ENCODE measurements at regions of chr14 and their contacts with region 1.

Region 1: DNA sequence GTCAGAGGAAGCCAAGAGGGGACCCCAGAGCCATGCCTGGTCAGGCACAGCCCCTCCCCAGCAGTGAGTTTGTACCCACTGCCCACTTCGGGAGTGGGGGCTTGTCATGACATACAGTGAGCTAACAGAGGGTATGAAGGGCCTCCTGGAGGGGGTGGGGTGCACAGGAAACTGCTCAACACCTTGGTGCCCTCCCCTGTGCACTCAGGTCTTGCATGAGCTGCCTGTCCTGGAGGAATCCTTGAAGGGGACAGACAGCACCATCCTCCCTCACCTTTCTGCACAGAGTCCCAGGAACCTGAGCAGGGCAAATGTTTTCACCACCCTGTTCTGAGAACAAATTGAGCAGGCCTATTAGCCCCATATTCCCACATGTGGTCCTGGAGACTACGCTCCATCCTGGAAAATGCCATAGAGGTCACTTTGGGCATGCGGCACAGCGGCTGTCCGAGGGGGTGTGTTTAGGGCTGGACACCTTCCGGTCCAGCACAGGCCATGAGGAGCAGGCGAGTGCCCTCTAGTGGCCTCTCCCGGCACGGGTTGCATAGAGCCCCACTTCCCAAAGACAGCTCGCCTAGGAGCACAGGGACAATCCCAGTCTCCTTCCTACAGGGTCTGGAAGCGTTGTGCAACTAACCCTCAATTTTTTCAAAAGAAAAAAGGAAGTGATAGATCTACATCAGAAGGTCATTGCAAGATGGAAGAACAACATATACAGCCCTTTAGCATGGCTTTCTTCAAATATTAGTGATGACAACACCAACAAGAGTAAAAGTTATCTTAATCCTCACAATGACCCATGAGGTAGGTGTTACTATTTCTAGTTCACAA is 31.9 kb upstream of the ZFP36L1 start:
- DNase-seq: peak; percentile 62
- ATAC-seq: peak; percentile 99
- H3K4me3 ChIP-seq: no peak overlapping the region
- H3K27ac ChIP-seq: no peak overlapping the region
- H3K4me1 ChIP-seq: no peaks in the 10 kb centered on the region
- H3K27me3 ChIP-seq: no peaks in the 10 kb centered on the region
- CTCF ChIP-seq: peak; percentile 83
- POLR2A ChIP-seq: no peak
- RAD21 ChIP-seq: peak; percentile 76

Region 2: GRCh38 chr14:67934008-67934481 is 890.7 kb before region 1 on chr14:
- CTCF ChIA-PET with region 1: interaction called, 3 read pairs
- POLR2A ChIA-PET with region 1: no interaction called
- dilution Hi-C with region 1: no loop called
- in situ Hi-C with region 1: loop called (anchors 5 kb)
- intact Hi-C with region 1: no loop called
- DNase-seq: peak; percentile 85
- ATAC-seq: peak; percentile 96
- H3K4me3 ChIP-seq: no peak overlapping the region
- H3K27ac ChIP-seq: no peak overlapping the region; the same call in 1 of the 2 replicates
- H3K4me1 ChIP-seq: no peaks in the 10 kb centered on the region; the same call in 1 of the 2 replicates
- H3K27me3 ChIP-seq: no peaks in the 10 kb centered on the region
- CTCF ChIP-seq: peak; percentile 75
- POLR2A ChIP-seq: no peak
- RAD21 ChIP-seq: peak; percentile 71

Region 3: DNA sequence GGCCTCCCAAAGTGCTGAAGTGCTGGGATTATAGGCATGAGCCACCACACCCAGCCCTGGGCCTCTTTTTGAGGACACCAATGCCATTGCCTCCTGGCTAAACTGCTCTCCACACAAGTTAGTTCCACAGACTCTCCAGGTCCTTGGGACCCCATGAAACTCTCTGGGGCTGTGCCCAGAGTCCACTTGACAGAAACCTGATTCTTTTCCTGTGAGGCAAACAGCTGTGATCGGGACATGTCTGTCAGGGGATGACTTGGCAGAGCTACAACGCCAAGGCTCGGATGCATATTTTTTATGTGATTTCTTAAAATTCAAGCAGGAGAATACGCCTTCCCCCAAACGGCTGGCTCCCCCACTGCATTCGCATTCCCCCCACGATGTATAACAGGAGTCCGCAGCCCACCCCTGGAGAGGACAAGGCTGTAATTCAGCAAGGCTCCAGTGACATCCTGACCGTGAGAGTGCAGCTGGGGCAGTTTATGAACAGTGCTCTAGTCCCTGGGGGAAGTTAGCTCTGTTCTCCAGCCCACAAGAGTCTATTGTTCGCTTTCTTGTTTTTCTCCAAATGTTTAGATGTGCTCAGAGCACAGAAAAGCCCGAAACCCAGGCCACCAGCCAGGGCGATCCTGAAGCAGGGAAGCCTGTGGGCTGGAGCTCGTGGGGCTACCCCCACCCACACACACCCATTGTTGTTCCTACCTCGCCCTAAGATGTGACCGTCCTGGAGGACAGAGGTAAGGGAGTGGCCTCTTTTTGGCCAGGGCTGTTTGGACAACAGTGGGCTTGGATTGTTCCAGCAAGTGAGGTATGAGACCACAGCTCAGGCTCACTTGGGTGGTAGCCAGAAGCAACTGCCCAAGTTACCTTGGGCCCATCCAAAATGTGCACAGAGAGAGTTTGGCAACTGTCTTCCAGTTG is 191.4 kb before region 1 on chr14:
- CTCF ChIA-PET with region 1: no interaction called
- POLR2A ChIA-PET with region 1: interaction called, 14 read pairs
- dilution Hi-C with region 1: no loop called
- in situ Hi-C with region 1: no loop called
- intact Hi-C with region 1: no loop called
- DNase-seq: no peak
- ATAC-seq: peak; percentile 43
- H3K4me3 ChIP-seq: no peak overlapping the region
- H3K27ac ChIP-seq: peak overlapping the region; percentile 60; the same call in 1 of the 2 replicates
- H3K4me1 ChIP-seq: peaks cover 28% of the 10 kb centered on the region
- H3K27me3 ChIP-seq: no peaks in the 10 kb centered on the region
- CTCF ChIP-seq: no peak
- POLR2A ChIP-seq: no peak
- RAD21 ChIP-seq: no peak

Region 4: GRCh38 chr14:68770051-68770450 is 54.7 kb before region 1 on chr14:
- CTCF ChIA-PET with region 1: no interaction called
- POLR2A ChIA-PET with region 1: no interaction called
- dilution Hi-C with region 1: no loop called
- in situ Hi-C with region 1: no loop called
- intact Hi-C with region 1: no loop called
- DNase-seq: no peak
- ATAC-seq: no peak
- H3K4me3 ChIP-seq: no peak overlapping the region
- H3K27ac ChIP-seq: no peak overlapping the region
- H3K4me1 ChIP-seq: peaks cover 2% of the 10 kb centered on the region; the same call in 1 of the 2 replicates
- H3K27me3 ChIP-seq: no peaks in the 10 kb centered on the region; the same call in 1 of the 2 replicates
- CTCF ChIP-seq: no peak
- POLR2A ChIP-seq: no peak
- RAD21 ChIP-seq: no peak

Region 5: DNA sequence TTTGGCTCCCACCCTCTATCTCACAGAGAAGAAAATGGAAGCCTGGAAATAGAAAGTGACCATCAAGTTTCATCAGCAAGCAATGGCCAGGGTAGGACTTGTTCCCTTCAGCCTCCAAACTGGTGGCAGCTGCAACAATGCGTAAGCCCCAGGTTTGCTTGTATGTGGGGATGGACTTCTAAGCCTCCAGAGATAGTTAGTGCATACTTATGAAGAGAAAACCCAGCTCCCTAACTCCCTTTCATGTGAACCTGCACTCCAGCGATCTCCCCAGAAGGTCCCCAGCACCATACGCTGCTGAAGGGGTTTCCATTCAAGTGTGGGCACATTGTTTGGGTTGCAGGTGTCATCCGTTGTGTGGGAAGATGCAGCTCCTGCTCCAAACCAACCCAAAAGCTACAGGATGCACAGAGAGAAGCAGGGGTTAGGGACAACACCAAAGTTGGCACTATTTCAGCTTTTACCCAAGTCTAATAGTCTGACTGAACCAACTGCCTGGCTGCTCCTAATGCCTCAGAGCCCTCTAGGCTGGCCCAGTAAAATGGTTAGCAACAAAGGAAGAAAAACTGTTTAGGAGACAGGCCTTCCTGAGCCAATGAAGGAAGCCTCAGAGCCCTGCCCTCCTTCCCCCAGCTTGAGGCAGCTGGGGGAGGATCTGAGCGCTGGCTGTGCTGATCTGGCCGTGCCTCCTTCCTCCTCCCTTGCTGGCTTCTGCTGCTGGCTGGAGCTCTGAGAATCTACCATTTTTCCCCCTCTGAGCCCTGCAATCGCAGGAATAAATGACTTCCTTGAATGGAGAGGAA is 44.2 kb before region 1 on chr14:
- CTCF ChIA-PET with region 1: no interaction called
- POLR2A ChIA-PET with region 1: no interaction called
- dilution Hi-C with region 1: no loop called
- in situ Hi-C with region 1: no loop called
- intact Hi-C with region 1: no loop called
- DNase-seq: peak; percentile 62
- ATAC-seq: peak; percentile 82
- H3K4me3 ChIP-seq: no peak overlapping the region
- H3K27ac ChIP-seq: peak overlapping the region; percentile 45
- H3K4me1 ChIP-seq: peaks cover 24% of the 10 kb centered on the region
- H3K27me3 ChIP-seq: no peaks in the 10 kb centered on the region
- CTCF ChIP-seq: no peak
- POLR2A ChIP-seq: no peak
- RAD21 ChIP-seq: no peak